ENCODE measurements at regions of chr7 and their contacts with region 1.

Region 1: DNA sequence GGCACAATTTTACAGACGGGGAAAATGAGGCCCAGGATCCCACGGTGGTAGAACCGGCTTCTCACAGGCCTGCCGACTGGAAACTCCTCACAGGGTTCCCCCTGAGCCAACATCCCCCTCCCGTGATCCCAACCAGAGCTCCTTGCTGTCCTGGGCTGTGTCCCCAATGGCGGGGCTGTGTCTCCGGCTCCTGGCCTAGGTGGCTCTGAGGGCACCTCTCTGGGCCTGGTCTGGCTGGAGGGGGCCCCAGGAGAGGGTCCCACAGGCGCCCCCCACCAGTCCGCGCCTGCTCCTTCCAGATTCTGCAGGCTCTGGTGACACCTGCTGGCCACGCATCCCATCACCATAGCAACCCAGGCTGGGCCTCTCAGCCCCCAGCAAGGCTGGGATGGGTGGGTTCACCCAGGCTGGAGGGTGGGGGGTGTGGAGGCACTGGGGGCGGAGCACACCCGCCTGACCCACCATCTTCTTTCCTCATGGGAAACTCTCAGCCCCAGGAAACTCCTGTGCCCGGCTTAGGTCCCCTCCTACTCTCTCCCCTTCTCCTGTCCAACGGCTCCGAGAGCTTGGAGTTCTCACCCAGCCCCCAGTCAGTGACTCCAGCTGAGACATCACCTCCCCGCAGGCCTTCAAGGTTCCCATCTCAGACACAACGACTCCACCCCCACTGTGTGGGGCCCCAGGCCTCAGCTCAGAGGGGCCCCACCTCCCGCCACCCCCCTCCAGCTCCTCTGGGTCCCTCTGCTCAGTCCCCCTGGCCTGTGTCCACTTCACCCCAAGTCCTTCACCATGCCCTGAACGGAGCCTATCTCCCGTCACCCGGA is 27.1 kb upstream of the TNRC18 start:
- DNase-seq: peak; percentile 35 to 74 (median 49)
- H3K4me3 ChIP-seq: no peak overlapping the region
- H3K27ac ChIP-seq: no peak overlapping the region
- H3K4me1 ChIP-seq: no peaks in the 10 kb centered on the region
- H3K27me3 ChIP-seq: no peaks in the 10 kb centered on the region
- CTCF ChIP-seq: peak; percentile 44 to 76 (median 64)
- POLR2A ChIP-seq: no peak

Region 2: GRCh38 chr7:5231811-5232484 is 218.8 kb before region 1 on chr7:
- intact Hi-C with region 1: loop called in 1 of 2 experiments (anchors 10 kb)
- DNase-seq: no peak
- H3K4me3 ChIP-seq: no peak overlapping the region
- H3K27ac ChIP-seq: peak overlapping the region in 1 of 5 donors; percentile 52
- H3K4me1 ChIP-seq: peaks cover 0 to 5% of the 10 kb centered on the region in 2 donors
- H3K27me3 ChIP-seq: no peaks in the 10 kb centered on the region
- CTCF ChIP-seq: no peak
- POLR2A ChIP-seq: no peak

Region 3: DNA sequence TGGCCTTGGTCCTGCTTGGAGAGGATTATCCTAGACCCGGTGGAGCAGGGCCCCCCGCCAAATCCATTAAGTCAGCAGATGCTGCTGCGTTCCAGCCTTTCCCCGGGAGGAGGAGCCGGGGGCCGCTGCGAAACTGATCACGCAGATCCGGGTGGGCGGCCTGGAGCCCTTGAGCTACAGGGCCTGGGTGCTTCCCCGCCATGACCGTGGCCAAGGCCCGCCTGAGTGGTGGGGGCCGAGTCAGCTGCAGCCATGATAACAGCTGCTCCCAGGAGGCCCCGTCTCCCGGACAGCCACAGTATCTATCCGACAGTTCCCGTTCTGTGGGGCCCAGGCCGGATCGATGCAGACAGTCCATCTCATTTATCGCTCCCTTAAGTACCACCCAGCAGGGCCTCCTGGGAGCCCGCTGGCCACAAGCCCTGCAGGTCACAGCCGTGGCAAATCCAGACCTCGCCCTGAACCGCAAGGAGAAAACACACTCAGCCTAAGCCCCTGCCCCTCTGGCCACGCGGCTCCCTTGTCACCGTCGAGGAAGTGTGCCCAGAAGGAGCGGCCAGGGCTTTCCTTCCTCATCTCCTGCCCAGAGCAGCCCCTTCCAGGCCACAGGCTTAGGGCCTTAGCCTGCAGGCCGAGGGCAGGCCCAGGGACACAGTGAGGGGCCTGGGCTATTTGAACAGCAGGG is 202.4 kb before region 1 on chr7:
- intact Hi-C with region 1: loop called in 1 of 2 experiments (anchors 10 kb)
- DNase-seq: peak in 6 of 7 donors; percentile 26 to 69 (median 42)
- H3K4me3 ChIP-seq: no peak overlapping the region
- H3K27ac ChIP-seq: peak overlapping the region in 2 of 5 donors; percentile 49 to 65
- H3K4me1 ChIP-seq: no peaks in the 10 kb centered on the region
- H3K27me3 ChIP-seq: no peaks in the 10 kb centered on the region
- CTCF ChIP-seq: no peak
- POLR2A ChIP-seq: no peak

Region 4: GRCh38 chr7:5363729-5364128 is 87.0 kb before region 1 on chr7:
- intact Hi-C with region 1: loop called (anchors 10 kb)
- DNase-seq: no peak
- H3K4me3 ChIP-seq: no peak overlapping the region
- H3K27ac ChIP-seq: no peak overlapping the region
- H3K4me1 ChIP-seq: peaks cover 6 to 9% of the 10 kb centered on the region in 2 donors
- H3K27me3 ChIP-seq: no peaks in the 10 kb centered on the region
- CTCF ChIP-seq: no peak
- POLR2A ChIP-seq: no peak

Region 5: DNA sequence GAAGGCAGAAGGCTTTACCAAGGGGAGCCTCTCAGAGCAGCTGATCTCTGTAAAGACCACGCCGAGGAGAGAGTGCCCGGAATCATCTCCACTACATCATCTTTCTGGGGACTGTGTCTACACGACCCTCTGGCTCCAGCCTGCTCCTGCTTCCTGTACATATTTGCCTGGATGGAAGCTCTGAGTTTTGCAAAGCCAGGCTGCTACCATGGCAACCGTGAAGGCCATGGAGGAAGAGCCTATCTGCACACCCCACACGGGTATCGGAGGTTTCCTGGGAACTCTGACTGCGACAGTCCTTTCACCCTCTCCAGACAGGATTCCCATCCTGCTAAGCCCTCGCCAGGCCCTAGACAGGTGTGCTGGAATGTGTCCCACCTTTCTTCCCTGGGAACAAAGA is 56.3 kb after region 1 on chr7:
- intact Hi-C with region 1: no loop called
- DNase-seq: peak in 6 of 7 donors; percentile 61 to 80 (median 73)
- H3K4me3 ChIP-seq: no peak overlapping the region
- H3K27ac ChIP-seq: no peak overlapping the region
- H3K4me1 ChIP-seq: peaks cover 6 to 8% of the 10 kb centered on the region in 2 donors
- H3K27me3 ChIP-seq: no peaks in the 10 kb centered on the region
- CTCF ChIP-seq: no peak
- POLR2A ChIP-seq: no peak

Measured in adrenal gland (tissue), 19 donors.